Activated CD4-positive, alpha-beta memory T cell treated with anti-CD3 and anti-CD28 coated beads, Interleukin-2, amount 10 ng/mL, durations not matched to agents 7 days and 5 days (primary cell): ENCODE measurements at regions of chr6 and their contacts with region 1.

Region 1: GRCh38 chr6:36094753-36095496 is 35.4 kb upstream of the MAPK13 start:
- DNase-seq: peak; percentile 82
- H3K4me3 Mint-ChIP-seq: no peak overlapping the region
- H3K27ac Mint-ChIP-seq: no peak overlapping the region
- H3K4me1 Mint-ChIP-seq: peaks cover 25% of the 10 kb centered on the region
- H3K27me3 Mint-ChIP-seq: no peaks in the 10 kb centered on the region

Region 2: GRCh38 chr6:36033935-36034334 is 61.0 kb before region 1 on chr6:
- CTCF ChIA-PET with region 1: interaction called, 142 read pairs
- POLR2A ChIA-PET with region 1: interaction called, 48 read pairs
- DNase-seq: no peak
- H3K4me3 Mint-ChIP-seq: no peak overlapping the region
- H3K27ac Mint-ChIP-seq: no peak overlapping the region
- H3K4me1 Mint-ChIP-seq: peaks cover 67% of the 10 kb centered on the region
- H3K27me3 Mint-ChIP-seq: no peaks in the 10 kb centered on the region

Region 3: DNA sequence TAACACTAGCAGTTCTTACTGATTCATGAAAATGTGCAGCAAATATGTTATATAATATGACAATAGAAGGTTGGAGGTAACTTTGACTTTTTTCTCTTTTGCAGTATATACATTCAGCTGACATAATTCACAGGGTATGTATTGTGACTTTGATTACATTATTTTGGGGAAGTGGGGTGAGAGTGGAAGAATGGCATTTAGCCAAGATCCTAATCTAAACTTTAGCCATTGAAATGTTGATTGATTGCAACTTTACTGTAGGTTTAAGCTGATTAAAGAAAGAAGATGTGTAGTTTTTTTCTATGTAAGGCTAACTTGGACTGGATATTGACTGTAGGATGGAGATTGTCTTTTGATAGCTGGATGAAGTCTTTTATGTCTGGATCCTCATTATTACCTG is 21.3 kb before region 1 on chr6:
- CTCF ChIA-PET with region 1: interaction called, 11 read pairs
- POLR2A ChIA-PET with region 1: no interaction called
- DNase-seq: no peak
- H3K4me3 Mint-ChIP-seq: no peak overlapping the region
- H3K27ac Mint-ChIP-seq: no peak overlapping the region
- H3K4me1 Mint-ChIP-seq: peaks cover 3% of the 10 kb centered on the region
- H3K27me3 Mint-ChIP-seq: no peaks in the 10 kb centered on the region

Region 4: DNA sequence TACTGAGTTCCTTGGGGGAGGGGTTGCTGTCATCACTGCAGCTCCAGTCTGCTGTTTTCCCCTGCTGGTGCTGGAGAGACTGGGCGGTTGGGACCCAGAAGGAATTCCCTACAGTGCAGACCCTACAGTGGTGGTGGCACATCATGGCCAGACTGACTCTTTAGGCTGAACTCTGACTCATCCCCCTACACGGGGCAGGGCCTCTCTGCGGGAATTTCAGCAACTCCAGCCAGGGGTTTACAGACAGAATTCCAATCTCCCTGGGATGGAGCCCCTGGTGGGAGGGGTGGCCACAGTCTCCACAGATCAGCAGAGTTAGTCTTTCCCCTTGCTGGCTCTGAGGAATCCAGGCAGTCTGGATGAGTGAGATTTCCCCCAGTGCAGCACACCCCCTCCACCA is 11.5 kb before region 1 on chr6:
- CTCF ChIA-PET with region 1: interaction called, 16 read pairs
- POLR2A ChIA-PET with region 1: interaction called, 3 read pairs
- DNase-seq: no peak
- H3K4me3 Mint-ChIP-seq: no peak overlapping the region
- H3K27ac Mint-ChIP-seq: no peak overlapping the region
- H3K4me1 Mint-ChIP-seq: peaks cover 2% of the 10 kb centered on the region
- H3K27me3 Mint-ChIP-seq: no peaks in the 10 kb centered on the region

Region 5: DNA sequence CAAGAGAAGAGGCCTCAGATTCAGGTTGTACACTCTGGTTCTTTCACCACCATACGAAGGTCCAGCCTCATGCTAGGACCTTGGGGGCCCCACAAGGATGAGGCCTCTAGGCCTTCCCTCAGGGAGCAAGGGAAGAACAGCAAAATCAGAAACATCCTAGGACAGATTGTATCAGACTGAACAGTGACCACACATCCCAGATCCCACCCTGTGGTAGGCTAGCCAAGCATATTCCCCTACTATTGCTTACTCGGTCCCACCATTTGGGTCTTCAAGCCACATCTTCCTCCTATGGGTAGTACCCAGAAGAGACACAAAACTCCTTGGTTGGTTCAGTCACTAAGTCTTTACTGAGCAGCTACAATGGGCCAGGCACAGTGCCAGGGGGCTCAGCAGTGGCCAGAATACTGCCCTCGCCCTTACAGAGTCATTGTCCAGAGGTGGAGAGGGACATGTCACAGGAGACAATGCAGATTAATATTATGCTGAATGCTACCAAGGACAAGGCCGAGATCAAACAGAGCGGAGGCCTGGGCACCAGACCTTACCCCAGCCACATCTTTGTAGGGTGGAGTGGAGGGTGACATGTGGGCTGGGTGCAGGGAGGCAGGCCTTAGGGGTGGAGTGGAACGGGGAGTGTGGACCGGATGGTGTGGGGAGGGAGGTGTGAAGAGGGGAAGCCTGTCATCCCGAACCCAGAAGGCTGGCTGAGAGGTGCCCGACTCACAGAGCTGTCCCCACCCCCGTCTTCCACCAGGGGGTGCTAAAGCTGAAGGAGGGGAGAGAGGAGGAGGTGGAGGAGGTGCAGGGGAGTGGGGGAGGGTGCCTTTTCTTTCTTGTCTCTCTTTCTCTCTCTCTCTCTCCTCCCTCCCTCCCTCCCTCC is 28.6 kb after region 1 on chr6:
- CTCF ChIA-PET with region 1: interaction called, 10 read pairs
- POLR2A ChIA-PET with region 1: interaction called, 25 read pairs
- DNase-seq: peak; percentile 96
- H3K4me3 Mint-ChIP-seq: peak overlapping the region; percentile 22
- H3K27ac Mint-ChIP-seq: peak overlapping the region; percentile 71
- H3K4me1 Mint-ChIP-seq: peaks cover 79% of the 10 kb centered on the region
- H3K27me3 Mint-ChIP-seq: no peaks in the 10 kb centered on the region

Region 6: GRCh38 chr6:36131511-36132245 is 36.8 kb after region 1 on chr6:
- CTCF ChIA-PET with region 1: interaction called, 14 read pairs
- POLR2A ChIA-PET with region 1: interaction called, 5 read pairs
- DNase-seq: peak; percentile 66
- H3K4me3 Mint-ChIP-seq: peak overlapping the region; percentile 86
- H3K27ac Mint-ChIP-seq: peak overlapping the region; percentile 93
- H3K4me1 Mint-ChIP-seq: peaks cover 45% of the 10 kb centered on the region
- H3K27me3 Mint-ChIP-seq: no peaks in the 10 kb centered on the region

Region 7: DNA sequence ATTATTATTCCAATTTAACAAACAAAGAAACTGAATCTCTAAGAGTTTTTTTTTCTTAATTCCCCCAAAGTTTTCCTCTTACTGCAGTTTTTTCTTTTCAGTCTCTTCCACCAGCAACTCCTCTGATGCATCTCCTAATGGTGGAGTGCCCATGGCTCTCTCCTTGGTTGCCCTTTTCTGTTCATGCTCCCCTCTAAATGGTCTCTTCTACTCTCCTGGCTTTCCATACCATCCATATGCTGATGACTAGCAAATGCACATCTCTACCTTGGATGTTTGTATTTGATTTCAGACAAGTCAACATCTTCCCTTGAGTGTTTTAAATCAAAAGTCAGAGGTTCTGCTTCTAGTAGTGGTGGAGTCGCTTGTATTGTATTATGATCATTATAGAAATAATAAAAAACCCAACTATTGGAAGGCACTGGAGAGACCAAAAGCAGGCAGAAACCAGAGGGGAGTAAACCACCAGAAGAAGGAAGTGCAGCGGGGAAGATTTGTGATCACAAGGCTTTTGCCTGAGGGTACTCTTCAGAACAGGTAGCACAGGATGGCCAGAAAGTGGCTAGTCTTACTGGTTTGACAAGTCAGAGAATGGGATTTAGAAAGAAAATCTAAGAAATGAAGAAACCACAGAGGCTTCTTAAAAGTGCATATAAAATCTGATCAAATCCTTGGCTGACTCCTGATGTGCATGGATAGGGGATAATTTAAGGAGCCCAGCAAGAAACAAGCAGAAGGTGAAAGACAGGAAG is 59.2 kb after region 1 on chr6:
- CTCF ChIA-PET with region 1: no interaction called
- POLR2A ChIA-PET with region 1: no interaction called
- DNase-seq: no peak
- H3K4me3 Mint-ChIP-seq: no peak overlapping the region
- H3K27ac Mint-ChIP-seq: no peak overlapping the region
- H3K4me1 Mint-ChIP-seq: peaks cover 13% of the 10 kb centered on the region
- H3K27me3 Mint-ChIP-seq: no peaks in the 10 kb centered on the region